Activated CD4-positive, alpha-beta memory T cell treated with anti-CD3 and anti-CD28 coated beads for 36 hours (primary cell): ENCODE measurements at regions of chr11 and their contacts with region 1.

Region 1: GRCh38 chr11:128528294-128528693 is 59.1 kb downstream of the ETS1 start:
- DNase-seq: no peak
- H3K4me3 Mint-ChIP-seq: no peak overlapping the region
- H3K27ac Mint-ChIP-seq: peak overlapping the region; percentile 26
- H3K4me1 Mint-ChIP-seq: peaks cover 65% of the 10 kb centered on the region
- H3K27me3 Mint-ChIP-seq: no peaks in the 10 kb centered on the region

Region 2: GRCh38 chr11:127993788-127994187 is 534.5 kb before region 1 on chr11:
- CTCF ChIA-PET with region 1: no interaction called
- POLR2A ChIA-PET with region 1: no interaction called
- intact Hi-C with region 1: no loop called
- DNase-seq: no peak
- H3K4me3 Mint-ChIP-seq: no peak overlapping the region
- H3K27ac Mint-ChIP-seq: no peak overlapping the region
- H3K4me1 Mint-ChIP-seq: no peaks in the 10 kb centered on the region
- H3K27me3 Mint-ChIP-seq: peaks cover 3% of the 10 kb centered on the region

Region 3: GRCh38 chr11:128544471-128545051 is 16.3 kb after region 1 on chr11:
- CTCF ChIA-PET with region 1: interaction called, 3 read pairs
- POLR2A ChIA-PET with region 1: interaction called, 35 read pairs
- intact Hi-C with region 1: loop called (anchors 1 kb)
- DNase-seq: no peak
- H3K4me3 Mint-ChIP-seq: peak overlapping the region; percentile 58
- H3K27ac Mint-ChIP-seq: peak overlapping the region; percentile 64
- H3K4me1 Mint-ChIP-seq: peaks cover 57% of the 10 kb centered on the region
- H3K27me3 Mint-ChIP-seq: no peaks in the 10 kb centered on the region

Region 4: GRCh38 chr11:128868841-128869580 is 340.7 kb after region 1 on chr11:
- CTCF ChIA-PET with region 1: no interaction called
- POLR2A ChIA-PET with region 1: no interaction called
- intact Hi-C with region 1: no loop called
- DNase-seq: peak; percentile 44
- H3K4me3 Mint-ChIP-seq: no peak overlapping the region
- H3K27ac Mint-ChIP-seq: no peak overlapping the region
- H3K4me1 Mint-ChIP-seq: no peaks in the 10 kb centered on the region
- H3K27me3 Mint-ChIP-seq: no peaks in the 10 kb centered on the region

Region 5: GRCh38 chr11:128917144-128917724 is 388.9 kb after region 1 on chr11:
- CTCF ChIA-PET with region 1: no interaction called
- POLR2A ChIA-PET with region 1: no interaction called
- intact Hi-C with region 1: no loop called
- DNase-seq: no peak
- H3K4me3 Mint-ChIP-seq: no peak overlapping the region
- H3K27ac Mint-ChIP-seq: no peak overlapping the region
- H3K4me1 Mint-ChIP-seq: peaks cover 2% of the 10 kb centered on the region
- H3K27me3 Mint-ChIP-seq: peaks cover 11% of the 10 kb centered on the region